Calu3 (cell line): ENCODE measurements at regions of chr6 and their contacts with region 1.

Region 1: DNA sequence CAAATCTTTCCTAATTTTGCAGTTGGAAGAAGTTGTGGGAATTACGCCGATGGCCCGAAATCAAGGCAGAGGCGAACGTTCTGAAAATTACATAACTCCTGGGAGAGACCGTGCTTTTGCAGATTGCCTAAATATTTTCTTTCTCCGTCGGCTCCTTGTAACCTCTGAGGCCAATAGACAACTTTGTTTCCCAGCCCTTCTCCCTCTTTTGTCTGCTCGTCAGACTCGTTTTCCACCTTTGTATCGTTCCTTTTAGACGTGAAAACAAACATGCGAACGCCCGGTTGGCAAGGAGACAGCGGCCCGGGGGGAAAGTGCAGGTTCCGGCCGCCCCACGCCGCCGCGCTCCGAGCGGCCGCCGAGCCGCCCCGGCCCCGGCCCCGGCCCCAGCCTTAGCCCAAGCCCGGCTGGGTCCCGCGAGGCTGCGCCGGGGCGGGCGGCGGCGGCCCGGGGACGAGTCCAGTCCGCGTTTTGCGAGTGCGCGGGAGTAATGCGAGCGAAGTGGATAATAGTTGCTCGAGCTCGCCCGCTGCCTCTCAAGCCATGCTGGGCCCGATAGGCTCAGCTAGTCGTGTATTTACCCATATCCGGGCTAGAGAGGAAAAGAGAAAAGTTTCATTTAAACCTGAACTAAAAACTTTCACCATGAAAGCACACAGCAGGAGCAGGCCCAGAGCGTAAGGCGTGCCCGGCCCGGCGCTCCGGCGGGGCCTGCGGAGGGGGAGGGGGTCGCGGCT is at the start of gene ARID1B:
- DNase-seq: peak; percentile 65
- H3K4me3 Mint-ChIP-seq: peak within 1 kb of the TSS; percentile 89
- H3K27ac Mint-ChIP-seq: peak within 1 kb of the TSS; percentile 88
- H3K4me1 Mint-ChIP-seq: no peaks in the 10 kb centered on the region
- H3K27me3 Mint-ChIP-seq: no peaks in the 10 kb centered on the region
- CTCF ChIP-seq: no peak
- total RNA-seq, gene ARID1B: 50.5 and 53.5 TPM in 2 replicates

Region 2: GRCh38 chr6:155327326-155328073 is 1449.5 kb before region 1 on chr6:
- CTCF ChIA-PET with region 1: no interaction called
- intact Hi-C with region 1: loop called (anchors 5 kb)
- DNase-seq: peak; percentile 67
- H3K4me3 Mint-ChIP-seq: peak overlapping the region; percentile 55
- H3K27ac Mint-ChIP-seq: peak overlapping the region; percentile 96
- H3K4me1 Mint-ChIP-seq: peaks cover 42% of the 10 kb centered on the region
- H3K27me3 Mint-ChIP-seq: no peaks in the 10 kb centered on the region
- CTCF ChIP-seq: peak; percentile 52

Region 3: GRCh38 chr6:156686995-156687788 is 89.8 kb before region 1 on chr6:
- CTCF ChIA-PET with region 1: no interaction called
- intact Hi-C with region 1: loop called (anchors 2 kb)
- DNase-seq: peak; percentile 80
- H3K4me3 Mint-ChIP-seq: peak overlapping the region; percentile 68
- H3K27ac Mint-ChIP-seq: peak overlapping the region; percentile 13
- H3K4me1 Mint-ChIP-seq: no peaks in the 10 kb centered on the region
- H3K27me3 Mint-ChIP-seq: no peaks in the 10 kb centered on the region
- CTCF ChIP-seq: no peak

Region 4: GRCh38 chr6:156832231-156832647 is 55.2 kb after region 1 on chr6:
- CTCF ChIA-PET with region 1: no interaction called
- intact Hi-C with region 1: no loop called
- DNase-seq: no peak
- H3K4me3 Mint-ChIP-seq: no peak overlapping the region
- H3K27ac Mint-ChIP-seq: no peak overlapping the region
- H3K4me1 Mint-ChIP-seq: peaks cover 12% of the 10 kb centered on the region
- H3K27me3 Mint-ChIP-seq: no peaks in the 10 kb centered on the region
- CTCF ChIP-seq: no peak

Region 5: GRCh38 chr6:156886409-156886808 is 109.4 kb after region 1 on chr6:
- CTCF ChIA-PET with region 1: interaction called, 3 read pairs
- intact Hi-C with region 1: loop called (anchors 1 kb)
- DNase-seq: peak; percentile 64
- H3K4me3 Mint-ChIP-seq: peak overlapping the region; percentile 67
- H3K27ac Mint-ChIP-seq: peak overlapping the region; percentile 92
- H3K4me1 Mint-ChIP-seq: peaks cover 50% of the 10 kb centered on the region
- H3K27me3 Mint-ChIP-seq: no peaks in the 10 kb centered on the region
- CTCF ChIP-seq: no peak

Region 6: GRCh38 chr6:156953479-156954146 is 176.6 kb after region 1 on chr6:
- CTCF ChIA-PET with region 1: no interaction called
- intact Hi-C with region 1: loop called (anchors 2 kb)
- DNase-seq: peak; percentile 73
- H3K4me3 Mint-ChIP-seq: peak overlapping the region; percentile 26
- H3K27ac Mint-ChIP-seq: peak overlapping the region; percentile 58
- H3K4me1 Mint-ChIP-seq: peaks cover 15% of the 10 kb centered on the region
- H3K27me3 Mint-ChIP-seq: no peaks in the 10 kb centered on the region
- CTCF ChIP-seq: no peak